GM12878 (cell line): ENCODE measurements at regions of chr9 and their contacts with region 1.

Region 1: GRCh38 chr9:84781458-84781857 is 111.9 kb downstream of the NTRK2 start:
- DNase-seq: no peak
- ATAC-seq: peak; percentile 71
- H3K4me3 ChIP-seq: no peak overlapping the region
- H3K27ac ChIP-seq: no peak overlapping the region
- H3K4me1 ChIP-seq: peaks cover 20% of the 10 kb centered on the region
- H3K27me3 ChIP-seq: no peaks in the 10 kb centered on the region
- CTCF ChIP-seq: peak; percentile 48 to 63 (median 52)
- EP300 ChIP-seq: no peak
- POLR2A ChIP-seq: no peak
- RAD21 ChIP-seq: peak; percentile 86

Region 2: DNA sequence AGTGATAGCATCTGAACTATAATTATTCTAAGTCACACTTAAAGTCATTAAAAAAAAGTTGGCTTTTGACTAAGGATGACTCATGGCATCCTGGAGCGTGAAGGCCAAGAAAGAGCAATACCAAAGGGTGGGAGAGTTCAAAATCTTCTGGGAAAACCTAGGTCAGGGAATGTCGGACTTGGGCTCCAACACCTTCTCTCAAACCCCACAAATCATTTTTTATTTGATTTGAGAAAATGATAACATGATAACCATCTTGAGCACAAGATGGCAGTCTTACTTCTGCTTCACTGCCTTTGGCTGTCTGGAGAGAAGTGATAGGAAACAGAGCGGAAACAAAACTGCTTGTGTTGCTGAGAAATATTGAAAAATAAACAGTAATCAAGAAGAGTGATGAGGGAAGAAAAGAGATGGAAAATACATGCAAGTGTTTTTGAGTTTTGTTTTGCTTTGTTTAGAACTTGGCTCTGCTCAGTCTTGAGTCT is 128.8 kb before region 1 on chr9:
- CTCF ChIA-PET with region 1: interaction called, 7 read pairs
- POLR2A ChIA-PET with region 1: no interaction called
- RAD21 ChIA-PET with region 1: interaction called, 5 read pairs
- SMC1A ChIA-PET with region 1: interaction called, 17 read pairs
- in situ Hi-C with region 1: no loop called
- intact Hi-C with region 1: no loop called
- DNase-seq: no peak
- ATAC-seq: no peak
- H3K4me3 ChIP-seq: no peak overlapping the region
- H3K27ac ChIP-seq: no peak overlapping the region
- H3K4me1 ChIP-seq: no peaks in the 10 kb centered on the region
- H3K27me3 ChIP-seq: 0 out of 4 replicates have a peak, but pooled peaks cover 0 to 3% of the 10 kb centered on the region in 2 experiments
- CTCF ChIP-seq: peak in 1 of 3 experiments; percentile 26; a peak in 1 of 6 replicates
- EP300 ChIP-seq: no peak
- POLR2A ChIP-seq: no peak
- RAD21 ChIP-seq: 0 out of 2 replicates have a peak, but pooled peaks have one; percentile 24

Region 3: DNA sequence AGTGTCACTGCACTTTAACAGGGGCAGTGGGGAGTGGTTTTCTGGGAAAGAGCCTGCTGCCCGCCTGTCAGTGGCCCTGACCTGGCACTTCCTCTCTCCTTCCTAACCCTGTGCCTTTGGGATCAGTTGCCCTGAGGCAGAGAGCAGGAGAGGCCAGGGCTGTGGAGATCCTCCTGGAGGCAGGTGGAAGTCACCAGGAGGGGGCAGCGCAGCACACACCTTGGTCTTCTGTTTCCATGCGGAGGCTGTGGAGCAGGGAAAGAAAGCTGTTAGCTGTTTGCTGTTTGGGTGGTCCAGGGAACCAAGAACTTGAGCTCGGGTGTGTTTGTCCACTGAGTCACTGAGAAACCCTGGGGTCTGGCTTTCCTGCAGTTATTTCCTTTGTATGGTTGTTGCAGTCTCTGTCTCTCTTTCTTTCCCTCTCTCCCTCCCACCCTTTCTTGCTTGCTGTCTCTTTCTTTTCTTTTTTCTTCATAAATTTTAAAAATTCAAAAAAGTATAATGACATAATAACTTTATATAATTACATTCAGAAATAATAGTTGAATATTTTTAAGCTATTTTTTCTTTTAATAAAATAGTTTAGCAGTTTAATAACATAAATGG is 83.8 kb before region 1 on chr9:
- CTCF ChIA-PET with region 1: interaction called, 792 read pairs
- POLR2A ChIA-PET with region 1: interaction called, 32 read pairs
- RAD21 ChIA-PET with region 1: interaction called, 582 read pairs
- SMC1A ChIA-PET with region 1: interaction called, 686 read pairs
- in situ Hi-C with region 1: loop called (anchors 5 kb)
- intact Hi-C with region 1: loop called (anchors 1 kb)
- DNase-seq: no peak
- ATAC-seq: peak; percentile 71
- H3K4me3 ChIP-seq: no peak overlapping the region
- H3K27ac ChIP-seq: no peak overlapping the region
- H3K4me1 ChIP-seq: peaks cover 26% of the 10 kb centered on the region
- H3K27me3 ChIP-seq: no peaks in the 10 kb centered on the region
- CTCF ChIP-seq: peak; percentile 88 to 96 (median 94)
- EP300 ChIP-seq: no peak
- POLR2A ChIP-seq: no peak
- RAD21 ChIP-seq: peak; percentile 90

Region 4: DNA sequence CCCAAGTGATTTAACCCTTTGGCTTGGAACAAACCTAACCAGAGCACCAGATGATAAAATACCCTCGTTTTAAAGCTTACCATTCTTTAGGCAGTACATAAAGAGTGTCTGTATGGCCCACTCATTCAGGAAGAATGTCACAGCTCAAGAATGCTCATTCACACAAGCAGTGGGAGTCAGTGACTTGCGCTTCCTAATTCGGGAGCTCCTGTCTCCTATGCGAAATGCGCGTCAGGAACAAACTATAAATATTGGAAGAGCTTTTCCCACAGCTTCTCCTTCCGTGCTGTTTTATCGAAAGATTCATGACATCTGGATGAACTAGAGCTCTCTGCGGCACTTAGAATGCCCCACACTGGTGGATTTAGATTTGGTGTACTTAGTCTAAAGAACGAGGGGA is 45.4 kb before region 1 on chr9:
- CTCF ChIA-PET with region 1: interaction called, 14 read pairs
- POLR2A ChIA-PET with region 1: no interaction called
- RAD21 ChIA-PET with region 1: interaction called, 10 read pairs
- SMC1A ChIA-PET with region 1: interaction called, 15 read pairs
- in situ Hi-C with region 1: no loop called
- intact Hi-C with region 1: loop called (anchors 5 kb)
- DNase-seq: no peak
- ATAC-seq: no peak
- H3K4me3 ChIP-seq: no peak overlapping the region
- H3K27ac ChIP-seq: no peak overlapping the region
- H3K4me1 ChIP-seq: no peaks in the 10 kb centered on the region
- H3K27me3 ChIP-seq: no peaks in the 10 kb centered on the region
- CTCF ChIP-seq: no peak
- EP300 ChIP-seq: no peak
- POLR2A ChIP-seq: no peak
- RAD21 ChIP-seq: no peak

Region 5: GRCh38 chr9:84759300-84759750 is 22.1 kb before region 1 on chr9:
- CTCF ChIA-PET with region 1: interaction called, 55 read pairs
- POLR2A ChIA-PET with region 1: interaction called, 9 read pairs
- RAD21 ChIA-PET with region 1: interaction called, 101 read pairs
- SMC1A ChIA-PET with region 1: interaction called, 204 read pairs
- in situ Hi-C with region 1: no loop called
- intact Hi-C with region 1: loop called (anchors 2 kb)
- DNase-seq: peak; percentile 81
- ATAC-seq: peak; percentile 78
- H3K4me3 ChIP-seq: peak overlapping the region; percentile 4; the same call in 1 of the 2 replicates
- H3K27ac ChIP-seq: peak overlapping the region; percentile 82
- H3K4me1 ChIP-seq: peaks cover 24% of the 10 kb centered on the region
- H3K27me3 ChIP-seq: no peaks in the 10 kb centered on the region
- CTCF ChIP-seq: no peak
- EP300 ChIP-seq: peak; percentile 96
- POLR2A ChIP-seq: no peak
- RAD21 ChIP-seq: no peak

Region 6: DNA sequence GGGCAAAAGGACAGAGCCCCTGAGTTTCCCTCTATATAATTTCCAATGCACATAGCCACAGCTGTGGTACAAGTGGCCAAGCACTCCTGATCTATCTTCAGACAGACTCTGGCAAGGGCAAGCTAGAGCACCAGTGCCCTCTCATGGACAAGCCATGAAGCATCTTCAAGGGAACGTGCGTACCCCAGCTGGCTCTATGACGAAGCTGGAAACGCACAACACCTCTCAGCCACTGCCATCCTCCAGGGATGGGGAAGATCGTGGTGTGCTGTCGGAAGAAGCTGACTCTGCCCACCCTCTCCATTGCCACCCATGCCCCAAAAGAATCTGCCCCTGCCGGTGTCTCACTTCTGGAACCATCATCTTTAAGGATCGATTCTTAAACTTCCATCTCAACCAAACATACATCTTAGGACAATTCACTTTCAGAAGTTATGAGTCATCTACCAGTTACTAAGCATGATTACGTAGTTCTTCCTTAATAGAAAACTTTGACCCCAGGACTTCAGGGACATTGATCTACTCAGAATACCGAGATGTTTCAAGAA is 477.4 kb after region 1 on chr9:
- CTCF ChIA-PET with region 1: interaction called, 10 read pairs
- POLR2A ChIA-PET with region 1: no interaction called
- RAD21 ChIA-PET with region 1: interaction called, 9 read pairs
- SMC1A ChIA-PET with region 1: interaction called, 5 read pairs
- in situ Hi-C with region 1: no loop called
- intact Hi-C with region 1: no loop called
- DNase-seq: peak; percentile 20
- ATAC-seq: peak; percentile 97
- H3K4me3 ChIP-seq: no peak overlapping the region
- H3K27ac ChIP-seq: no peak overlapping the region
- H3K4me1 ChIP-seq: no peaks in the 10 kb centered on the region
- H3K27me3 ChIP-seq: peaks cover 0 to 3% of the 10 kb centered on the region in 2 experiments; a peak in 1 of 4 replicates
- CTCF ChIP-seq: peak; percentile 69 to 82 (median 72)
- EP300 ChIP-seq: no peak
- POLR2A ChIP-seq: no peak
- RAD21 ChIP-seq: peak; percentile 75